Ascending aorta (tissue), 2 donors: ENCODE measurements at regions of chr6 and their contacts with region 1.

Region 1: DNA sequence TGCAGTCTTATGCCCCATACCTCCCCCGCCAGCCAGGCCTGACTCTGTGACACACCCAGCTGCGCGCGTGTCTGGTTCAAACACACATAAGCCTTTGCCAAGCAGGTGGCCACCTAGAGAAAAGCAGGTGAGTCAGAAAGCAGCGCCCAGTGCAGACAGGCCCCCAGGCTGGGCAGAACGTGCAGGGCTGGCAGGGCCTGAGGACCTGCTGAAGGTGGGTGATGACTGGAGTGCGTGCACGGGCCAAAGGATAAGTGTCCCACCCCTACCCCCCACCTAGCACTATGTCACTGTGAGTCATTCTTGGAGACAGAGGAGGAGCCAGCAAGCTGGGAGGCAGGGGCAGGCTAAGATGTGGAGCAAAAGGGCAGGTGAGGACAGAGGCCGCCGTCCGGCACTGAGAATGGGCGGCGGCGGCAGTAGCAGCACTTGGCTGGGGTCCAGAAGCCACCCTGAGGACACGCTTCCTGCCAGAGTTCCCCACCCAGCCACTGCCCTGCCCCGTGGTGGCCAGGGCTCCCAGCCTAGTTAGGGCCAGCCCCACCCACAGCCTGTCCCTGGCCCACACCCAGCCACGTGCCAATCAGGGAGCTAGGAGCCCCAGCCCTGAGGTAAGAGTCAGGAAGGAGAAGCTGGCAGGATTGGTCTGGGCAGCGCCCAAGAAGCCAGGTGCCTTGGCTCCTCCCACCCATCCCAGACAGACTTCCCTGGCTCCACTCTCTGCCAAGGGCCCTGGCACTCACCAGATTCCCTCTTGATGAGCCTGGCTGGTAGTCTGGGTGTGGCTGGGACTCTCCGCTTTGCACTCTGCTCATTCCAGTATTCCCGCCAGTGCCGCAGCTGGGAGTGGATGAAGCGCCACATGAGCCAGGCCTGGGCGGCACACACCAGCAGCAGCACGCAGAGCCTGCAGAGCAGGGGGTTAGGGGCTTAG is 72.7 kb downstream of the TRAM2 start:
- DNase-seq: peak; percentile 87 to 93
- H3K4me3 ChIP-seq: no peak overlapping the region
- H3K27ac ChIP-seq: peak overlapping the region; percentile 72 to 82
- H3K4me1 ChIP-seq: peaks cover 24 to 35% of the 10 kb centered on the region in 2 donors
- H3K27me3 ChIP-seq: no peaks in the 10 kb centered on the region
- CTCF ChIP-seq: no peak

Region 2: GRCh38 chr6:52284460-52285176 is 219.5 kb before region 1 on chr6 and contains the start of gene MCM3:
- intact Hi-C with region 1: loop called (anchors 5 kb)
- DNase-seq: peak; percentile 96 to 99
- H3K4me3 ChIP-seq: peak within 1 kb of the TSS; percentile 75 to 100
- H3K27ac ChIP-seq: peak within 1 kb of the TSS; percentile 71 to 72
- H3K4me1 ChIP-seq: peaks cover 10 to 11% of the 10 kb centered on the region in 2 donors
- H3K27me3 ChIP-seq: no peaks in the 10 kb centered on the region
- CTCF ChIP-seq: no peak
- total RNA-seq, gene MCM3: 44.6 TPM

Region 3: DNA sequence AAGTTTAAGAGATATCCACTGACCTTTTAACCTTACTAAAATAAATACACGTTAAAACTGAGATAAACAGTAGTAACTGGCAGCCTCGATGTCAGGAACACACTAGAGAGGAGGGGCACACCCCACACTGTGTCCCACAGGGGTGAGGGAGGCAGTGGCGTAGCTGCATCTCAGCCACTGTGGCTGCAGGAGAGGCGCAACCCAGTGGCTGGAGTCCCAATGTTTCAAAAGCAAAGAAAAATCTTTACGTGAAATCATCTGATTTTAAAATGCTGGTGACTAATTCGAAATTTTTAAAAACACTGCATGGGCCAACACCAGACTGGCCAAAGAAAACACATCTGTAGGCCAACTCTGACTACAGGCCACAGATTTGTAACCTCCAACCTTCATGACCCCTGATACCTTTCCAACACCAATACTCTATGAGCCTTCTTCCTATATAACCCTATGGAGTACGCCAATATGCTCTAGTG is 18.1 kb after region 1 on chr6:
- intact Hi-C with region 1: loop called (anchors 2 kb)
- DNase-seq: peak in 1 of 2 donors; percentile 87
- H3K4me3 ChIP-seq: peak overlapping the region in 1 of 2 donors; percentile 19
- H3K27ac ChIP-seq: peak overlapping the region; percentile 73 to 74
- H3K4me1 ChIP-seq: peaks cover 22 to 42% of the 10 kb centered on the region in 2 donors
- H3K27me3 ChIP-seq: no peaks in the 10 kb centered on the region
- CTCF ChIP-seq: no peak

Region 4: GRCh38 chr6:52551401-52552277 is 47.5 kb after region 1 on chr6:
- intact Hi-C with region 1: loop called (anchors 2 kb)
- DNase-seq: peak in 1 of 2 donors; percentile 92
- H3K4me3 ChIP-seq: peak overlapping the region in 1 of 2 donors; percentile 46
- H3K27ac ChIP-seq: peak overlapping the region; percentile 74 to 81
- H3K4me1 ChIP-seq: peaks cover 23 to 77% of the 10 kb centered on the region in 2 donors
- H3K27me3 ChIP-seq: no peaks in the 10 kb centered on the region
- CTCF ChIP-seq: no peak

Region 5: DNA sequence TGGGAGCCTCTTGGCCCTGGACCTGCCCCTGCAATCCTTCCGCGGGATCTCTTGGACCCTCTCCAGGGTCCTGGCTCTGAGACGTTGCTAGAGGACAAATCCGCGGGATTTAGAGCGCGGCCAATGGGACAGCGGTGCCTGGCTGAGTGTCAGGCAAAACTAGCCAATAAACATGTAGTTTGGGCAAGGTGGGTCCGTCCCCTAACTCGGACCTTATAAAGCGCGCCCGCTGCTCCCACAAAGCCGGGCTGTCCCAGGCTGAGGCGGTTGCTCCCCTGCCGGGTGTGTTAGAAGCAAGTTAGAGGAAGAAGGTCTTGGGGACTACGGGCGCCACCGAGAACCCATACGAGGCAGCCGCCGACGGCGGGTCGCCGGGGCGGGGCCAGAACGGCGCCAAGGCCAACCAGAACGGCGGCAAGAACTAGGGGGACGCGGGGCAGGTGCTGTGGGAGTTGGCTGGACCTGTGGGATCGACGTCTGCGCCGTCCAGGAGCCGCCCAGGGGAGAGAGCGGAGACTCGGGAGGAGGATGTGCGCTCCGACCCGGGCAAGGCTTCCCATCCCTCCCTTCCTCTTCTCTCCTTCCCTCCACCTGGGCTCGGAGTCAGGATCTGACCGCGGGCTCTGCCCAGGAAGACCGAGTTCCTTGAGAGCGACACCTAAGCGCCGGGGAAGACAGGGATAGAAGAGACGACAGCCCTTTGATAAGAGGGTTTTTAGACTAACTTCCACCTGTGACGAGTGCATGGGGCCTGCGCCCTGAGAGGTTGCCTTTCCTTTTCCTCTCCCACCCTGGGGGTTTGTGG is 160.3 kb after region 1 on chr6:
- intact Hi-C with region 1: loop called (anchors 5 kb)
- DNase-seq: peak; percentile 58 to 96
- H3K4me3 ChIP-seq: peak overlapping the region; percentile 80 to 86
- H3K27ac ChIP-seq: peak overlapping the region; percentile 72 to 78
- H3K4me1 ChIP-seq: peaks cover 4 to 12% of the 10 kb centered on the region in 2 donors
- H3K27me3 ChIP-seq: no peaks in the 10 kb centered on the region
- CTCF ChIP-seq: no peak

Region 6: DNA sequence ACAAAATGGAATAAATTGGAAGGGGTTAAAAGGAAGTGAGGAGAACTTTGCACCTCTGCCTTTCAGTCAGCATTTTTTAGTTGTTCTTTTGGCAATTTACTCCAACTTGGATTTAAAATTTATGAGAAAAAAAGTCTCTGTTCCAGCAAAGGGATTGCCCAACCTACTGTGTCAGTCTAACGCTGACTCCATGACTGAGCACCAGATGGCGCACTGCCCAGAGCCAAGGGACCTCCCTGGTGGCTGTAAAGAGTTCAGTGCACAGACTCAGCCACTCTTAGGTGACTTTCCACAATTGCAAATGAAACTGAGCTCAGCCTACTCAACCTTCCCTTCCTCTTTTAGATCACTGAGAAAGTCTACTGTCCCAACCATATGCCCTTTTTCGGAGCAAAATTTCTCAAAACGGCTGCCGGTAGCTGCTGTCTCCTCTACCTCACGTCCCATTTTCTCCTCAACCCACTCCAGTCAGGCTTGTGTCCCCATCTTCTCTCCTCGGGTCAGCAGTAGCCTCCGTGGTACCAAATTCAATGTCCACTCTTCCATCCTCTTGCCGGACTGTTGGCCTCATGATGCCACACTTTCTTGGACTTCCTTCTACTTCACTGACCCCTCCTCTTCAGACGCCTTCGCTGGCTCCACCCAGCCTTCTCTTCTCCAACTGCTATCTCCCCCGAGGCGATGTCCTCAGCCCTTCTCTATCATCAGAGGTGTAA is 220.4 kb after region 1 on chr6:
- intact Hi-C with region 1: loop called (anchors 10 kb)
- DNase-seq: peak; percentile 61 to 89
- H3K4me3 ChIP-seq: no peak overlapping the region
- H3K27ac ChIP-seq: peak overlapping the region; percentile 71 to 91
- H3K4me1 ChIP-seq: peaks cover 2 to 9% of the 10 kb centered on the region in 2 donors
- H3K27me3 ChIP-seq: no peaks in the 10 kb centered on the region
- CTCF ChIP-seq: peak in 2 of 3 experiments; percentile 43 to 48

Region 7: DNA sequence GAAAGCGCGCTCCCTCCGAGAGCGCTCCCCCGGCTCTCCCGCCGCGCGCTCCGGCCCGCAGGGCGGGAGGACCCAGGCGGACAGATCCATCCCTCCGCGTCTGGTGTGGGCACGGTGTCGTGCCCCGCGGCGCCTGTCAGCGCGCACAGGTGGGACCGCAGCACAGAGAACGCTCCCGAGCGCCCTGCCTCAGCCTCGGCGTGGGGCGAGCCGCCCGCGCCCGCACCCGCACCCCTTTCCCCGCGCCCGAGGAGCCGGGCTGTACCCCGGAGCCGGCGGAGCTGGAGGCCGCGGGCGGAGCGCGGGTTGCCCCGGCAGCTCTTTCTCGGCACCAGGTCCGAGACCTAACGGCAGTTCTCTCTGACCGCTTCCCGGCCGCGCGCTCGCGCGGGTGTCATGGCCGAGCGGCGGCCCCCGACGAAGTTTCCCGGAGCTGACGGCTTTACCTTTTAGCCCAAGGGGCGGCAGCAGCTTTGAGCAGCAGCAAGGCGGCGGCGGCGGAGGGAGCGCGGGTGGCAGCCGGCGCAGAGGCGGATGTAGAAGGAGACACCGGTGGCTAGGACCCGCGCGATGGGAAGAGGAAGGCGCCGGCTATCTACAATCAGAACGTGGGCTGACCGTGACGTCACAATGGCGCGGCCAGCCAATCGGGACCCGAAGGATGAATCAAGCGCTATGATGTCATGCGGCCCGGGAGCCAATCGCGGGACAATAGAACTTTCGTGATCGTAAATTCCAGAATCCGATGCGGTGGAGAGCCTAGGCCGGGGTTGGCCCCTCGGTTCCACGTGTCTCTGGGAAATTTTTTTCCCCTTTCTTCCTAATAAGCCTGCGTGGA is 844.5 kb after region 1 on chr6 and contains the start of gene ELOVL5:
- intact Hi-C with region 1: loop called (anchors 10 kb)
- DNase-seq: peak; percentile 99 to 100
- H3K4me3 ChIP-seq: peak within 1 kb of the TSS; percentile 93 to 98
- H3K27ac ChIP-seq: peak within 1 kb of the TSS; percentile 99
- H3K4me1 ChIP-seq: peaks cover 0 to 5% of the 10 kb centered on the region in 2 donors
- H3K27me3 ChIP-seq: no peaks in the 10 kb centered on the region
- CTCF ChIP-seq: no peak
- total RNA-seq, gene ELOVL5: 53.7 TPM